H1 (cell line): ENCODE measurements at regions of chr22 and their contacts with region 1.

Region 1: GRCh38 chr22:28882878-28883656 is at the start of gene ZNRF3:
- DNase-seq: peak; percentile 79 to 99
- H3K4me3 ChIP-seq: peak within 1 kb of the TSS; percentile 68 to 92 (median 80)
- H3K27ac ChIP-seq: peak within 1 kb of the TSS; percentile 83
- H3K4me1 ChIP-seq: peaks cover 3 to 14% (median 12%) of the 10 kb centered on the region in 4 experiments
- H3K27me3 ChIP-seq: peaks cover 0 to 3% (median 0%) of the 10 kb centered on the region in 4 experiments; a peak in 1 of 7 replicates
- CTCF ChIP-seq: no peak
- EP300 ChIP-seq: no peak
- POLR2A ChIP-seq: peak in 1 of 2 experiments; percentile 90; a peak in 2 of 3 replicates
- RAD21 ChIP-seq: no peak
- total RNA-seq, gene ZNRF3: 20.6 and 21.7 TPM in 2 replicates

Region 2: GRCh38 chr22:28810821-28811491 is 72.1 kb before region 1 on chr22:
- CTCF ChIA-PET with region 1: no interaction called
- POLR2A ChIA-PET with region 1: no interaction called
- DNase-seq: no peak
- H3K4me3 ChIP-seq: no peak overlapping the region
- H3K27ac ChIP-seq: no peak overlapping the region
- H3K4me1 ChIP-seq: no peaks in the 10 kb centered on the region; a peak in 1 of 7 replicates
- H3K27me3 ChIP-seq: no peaks in the 10 kb centered on the region
- CTCF ChIP-seq: no peak
- EP300 ChIP-seq: no peak
- POLR2A ChIP-seq: no peak
- RAD21 ChIP-seq: no peak

Region 3: DNA sequence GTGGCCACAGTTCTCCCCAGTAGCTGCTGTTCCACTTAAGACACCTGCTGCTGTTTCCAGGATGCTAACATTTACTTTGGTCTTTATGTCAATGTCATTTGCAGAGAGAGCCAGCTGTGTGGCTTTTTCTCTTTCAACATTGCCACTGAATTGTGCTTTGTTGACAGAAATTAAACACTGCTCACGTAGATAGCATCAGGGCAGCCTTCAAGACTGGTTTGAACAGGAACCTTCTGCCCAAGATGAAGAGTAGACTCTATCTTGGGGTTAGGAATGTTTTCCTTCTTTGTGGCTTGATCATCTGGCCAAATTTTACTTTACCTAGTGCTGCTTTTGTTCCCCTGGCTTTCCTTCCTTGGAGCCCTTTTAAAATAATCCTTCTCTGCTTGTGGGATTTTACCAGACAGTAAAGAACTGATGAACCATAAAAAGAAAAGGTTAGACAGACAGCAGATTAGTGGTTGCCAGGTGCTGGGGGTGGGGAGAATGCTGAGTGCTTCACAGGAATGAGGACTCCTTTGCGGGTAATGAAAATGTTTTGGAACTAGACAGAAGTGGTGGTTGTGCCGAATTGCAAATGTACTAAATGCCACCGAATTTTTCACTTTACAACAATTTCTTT is 60.0 kb before region 1 on chr22:
- CTCF ChIA-PET with region 1: no interaction called
- POLR2A ChIA-PET with region 1: no interaction called
- DNase-seq: no peak
- H3K4me3 ChIP-seq: no peak overlapping the region
- H3K27ac ChIP-seq: no peak overlapping the region
- H3K4me1 ChIP-seq: no peaks in the 10 kb centered on the region; a peak in 1 of 7 replicates
- H3K27me3 ChIP-seq: no peaks in the 10 kb centered on the region
- CTCF ChIP-seq: no peak
- EP300 ChIP-seq: no peak
- POLR2A ChIP-seq: no peak
- RAD21 ChIP-seq: no peak

Region 4: DNA sequence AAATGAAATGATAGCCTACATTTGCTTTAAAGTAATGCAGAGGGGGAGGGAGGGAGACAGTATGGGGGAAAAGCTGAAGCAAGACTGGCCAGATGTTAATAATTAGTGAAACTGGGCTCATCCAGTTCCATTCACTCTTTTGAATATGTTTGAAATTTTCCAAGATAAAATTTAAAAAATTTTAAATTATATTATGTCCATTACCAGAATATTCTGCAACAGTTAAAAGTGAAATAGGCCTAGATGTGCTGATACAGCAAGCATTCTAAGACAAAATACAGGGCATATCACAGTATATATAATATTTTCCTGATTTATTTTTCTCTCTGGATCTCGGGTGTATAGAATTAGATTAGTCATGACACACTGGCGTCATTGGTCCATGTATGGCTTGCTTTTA is 13.3 kb before region 1 on chr22:
- CTCF ChIA-PET with region 1: no interaction called
- POLR2A ChIA-PET with region 1: no interaction called
- DNase-seq: no peak
- H3K4me3 ChIP-seq: no peak overlapping the region
- H3K27ac ChIP-seq: no peak overlapping the region
- H3K4me1 ChIP-seq: no peaks in the 10 kb centered on the region
- H3K27me3 ChIP-seq: no peaks in the 10 kb centered on the region
- CTCF ChIP-seq: no peak
- EP300 ChIP-seq: no peak
- POLR2A ChIP-seq: no peak
- RAD21 ChIP-seq: no peak

Region 5: DNA sequence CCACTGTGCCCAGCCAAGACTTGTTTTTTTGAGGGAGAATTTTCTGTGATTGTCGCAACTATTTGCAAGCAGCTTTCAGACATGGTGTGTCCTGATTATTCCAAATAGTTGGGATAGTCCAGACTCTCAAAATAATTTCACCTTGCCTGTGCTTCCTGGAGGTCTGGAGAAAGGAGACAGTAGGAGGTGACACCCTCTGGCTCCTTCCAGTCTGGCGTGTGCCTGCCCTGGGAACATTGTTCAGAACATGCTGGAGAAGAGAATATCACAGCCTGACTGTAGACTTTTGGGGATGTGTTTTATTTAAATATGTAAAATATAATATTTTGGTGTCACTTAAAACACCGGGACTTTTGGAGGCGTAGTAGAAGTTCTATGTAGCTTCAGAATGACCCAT is 15.2 kb after region 1 on chr22:
- CTCF ChIA-PET with region 1: interaction called, 11 read pairs
- POLR2A ChIA-PET with region 1: interaction called, 15 read pairs
- DNase-seq: no peak
- H3K4me3 ChIP-seq: no peak overlapping the region
- H3K27ac ChIP-seq: no peak overlapping the region
- H3K4me1 ChIP-seq: peaks cover 17 to 26% (median 21%) of the 10 kb centered on the region in 4 experiments
- H3K27me3 ChIP-seq: no peaks in the 10 kb centered on the region
- CTCF ChIP-seq: no peak
- EP300 ChIP-seq: no peak
- POLR2A ChIP-seq: no peak
- RAD21 ChIP-seq: no peak

Region 6: GRCh38 chr22:29004647-29005371 is 121.7 kb after region 1 on chr22:
- CTCF ChIA-PET with region 1: interaction called, 3 read pairs
- POLR2A ChIA-PET with region 1: interaction called, 12 read pairs
- DNase-seq: peak in 1 of 2 experiments; percentile 75
- H3K4me3 ChIP-seq: peak overlapping the region in 3 of 4 experiments; percentile 21 to 46 (median 25); a peak in 4 of 8 replicates
- H3K27ac ChIP-seq: peak overlapping the region; percentile 77
- H3K4me1 ChIP-seq: peaks cover 12 to 32% (median 16%) of the 10 kb centered on the region in 4 experiments
- H3K27me3 ChIP-seq: no peaks in the 10 kb centered on the region
- CTCF ChIP-seq: no peak
- EP300 ChIP-seq: no peak
- POLR2A ChIP-seq: no peak
- RAD21 ChIP-seq: no peak

Region 7: DNA sequence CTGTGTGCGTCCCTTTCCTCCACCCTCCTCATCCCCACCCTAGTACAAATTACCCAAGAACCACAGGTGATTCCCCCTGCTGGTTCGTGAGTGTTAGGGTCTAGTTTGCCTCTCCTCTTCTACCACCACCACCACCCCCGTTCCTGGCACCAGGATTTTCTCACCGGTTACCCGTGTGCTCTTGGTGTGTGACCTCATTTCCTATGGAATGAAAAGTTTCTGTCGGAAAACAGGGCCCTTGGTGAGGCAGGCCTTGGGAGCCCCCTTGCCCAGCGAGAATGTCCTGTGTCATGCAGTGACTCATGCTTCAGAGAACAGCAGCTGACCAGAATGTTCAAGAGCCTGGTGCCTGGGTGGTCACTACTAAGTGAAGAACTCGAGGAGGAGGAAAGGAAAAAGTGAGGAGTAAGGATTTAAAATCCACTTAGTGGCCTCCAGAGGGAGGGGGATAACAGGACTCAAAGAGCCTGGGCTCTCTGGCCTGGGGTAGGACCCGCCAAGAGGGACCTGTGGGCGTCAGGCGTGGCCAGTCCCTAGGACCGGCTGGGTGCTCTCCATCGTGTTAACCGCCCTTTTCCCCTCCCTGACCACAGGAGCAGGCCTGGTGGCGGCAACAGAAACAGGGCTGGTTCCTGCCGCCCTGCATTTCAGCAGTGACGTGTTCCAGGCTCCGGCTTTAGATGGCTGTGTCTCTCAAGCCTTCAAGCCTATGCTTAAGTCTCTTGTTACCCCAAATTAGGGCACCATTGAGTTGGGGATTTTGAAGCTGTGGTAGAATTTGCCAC is 148.4 kb after region 1 on chr22:
- CTCF ChIA-PET with region 1: no interaction called
- POLR2A ChIA-PET with region 1: interaction called, 16 read pairs
- DNase-seq: peak; percentile 47 to 60
- H3K4me3 ChIP-seq: peak overlapping the region in 2 of 4 experiments; percentile 11 to 59; a peak in 3 of 8 replicates
- H3K27ac ChIP-seq: 0 out of 2 replicates have a peak overlapping the region, but pooled peaks have one; percentile 35
- H3K4me1 ChIP-seq: peaks cover 11 to 20% (median 15%) of the 10 kb centered on the region in 4 experiments
- H3K27me3 ChIP-seq: no peaks in the 10 kb centered on the region
- CTCF ChIP-seq: 0 out of 4 replicates have a peak, but pooled peaks of 1 of the 3 experiments have one; percentile 6
- EP300 ChIP-seq: no peak
- POLR2A ChIP-seq: no peak
- RAD21 ChIP-seq: peak in 1 of 2 experiments; percentile 36; a peak in 1 of 4 replicates